Activated naive CD8-positive, alpha-beta T cell treated with anti-CD3 and anti-CD28 coated beads, Interleukin-2, amount 10 ng/mL, durations not matched to agents 7 days and 5 days (primary cell): ENCODE measurements at regions of chr9 and their contacts with region 1.

Region 1: GRCh38 chr9:132944302-132945185 is at the start of gene TSC1:
- DNase-seq: peak; percentile 98
- ATAC-seq: peak; percentile 87
- H3K4me3 Mint-ChIP-seq: peak within 1 kb of the TSS; percentile 89
- H3K27ac Mint-ChIP-seq: peak within 1 kb of the TSS; percentile 100
- H3K4me1 Mint-ChIP-seq: peaks cover 22% of the 10 kb centered on the region
- H3K27me3 Mint-ChIP-seq: no peaks in the 10 kb centered on the region
- total RNA-seq, gene TSC1: 38.5 to 43.0 TPM

Region 2: DNA sequence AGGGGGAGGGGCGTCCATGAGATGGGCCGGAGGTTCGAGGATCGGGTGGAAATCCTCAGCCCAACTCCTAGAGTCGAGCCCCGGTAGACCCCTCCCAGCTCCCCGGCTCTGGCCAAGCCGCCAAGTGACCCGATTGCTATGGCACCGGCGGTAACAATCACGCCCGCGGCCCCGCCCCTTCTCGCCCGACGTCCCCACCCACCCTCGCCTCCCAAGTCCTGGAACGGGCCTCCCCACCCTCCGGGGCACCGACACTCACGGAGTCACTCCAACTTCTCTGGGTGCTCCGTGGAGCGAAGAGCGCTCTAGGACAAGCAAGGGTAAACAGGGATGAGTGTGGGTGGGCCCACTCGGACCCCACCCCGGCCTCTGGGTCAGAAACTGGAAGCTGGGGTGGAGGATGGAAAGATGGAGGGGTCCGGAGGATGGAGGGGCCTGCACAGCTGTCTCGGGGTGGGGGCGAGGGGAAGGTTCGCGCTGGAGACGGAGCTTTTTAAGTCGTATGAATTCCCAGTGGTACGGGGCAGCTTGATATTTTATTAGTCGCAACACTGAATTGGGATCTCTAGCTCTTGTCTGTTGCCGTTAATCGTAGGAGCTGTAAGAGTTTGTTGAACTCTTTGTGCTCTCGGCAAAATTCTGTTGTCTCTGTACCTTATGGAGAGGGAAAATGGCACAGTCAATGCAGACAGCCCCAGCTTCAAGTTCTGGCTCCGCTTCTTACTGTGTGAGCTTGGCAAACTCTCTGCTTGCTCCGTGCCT is 65.7 kb before region 1 on chr9 and contains the start of gene SPACA9:
- POLR2A ChIA-PET with region 1: interaction called, 15 read pairs
- DNase-seq: peak; percentile 55
- ATAC-seq: no peak
- H3K4me3 Mint-ChIP-seq: peak within 1 kb of the TSS; percentile 81
- H3K27ac Mint-ChIP-seq: peak within 1 kb of the TSS; percentile 83
- H3K4me1 Mint-ChIP-seq: peaks cover 31% of the 10 kb centered on the region
- H3K27me3 Mint-ChIP-seq: peaks cover 4% of the 10 kb centered on the region
- total RNA-seq, gene SPACA9: 4.1 to 6.3 TPM

Region 3: DNA sequence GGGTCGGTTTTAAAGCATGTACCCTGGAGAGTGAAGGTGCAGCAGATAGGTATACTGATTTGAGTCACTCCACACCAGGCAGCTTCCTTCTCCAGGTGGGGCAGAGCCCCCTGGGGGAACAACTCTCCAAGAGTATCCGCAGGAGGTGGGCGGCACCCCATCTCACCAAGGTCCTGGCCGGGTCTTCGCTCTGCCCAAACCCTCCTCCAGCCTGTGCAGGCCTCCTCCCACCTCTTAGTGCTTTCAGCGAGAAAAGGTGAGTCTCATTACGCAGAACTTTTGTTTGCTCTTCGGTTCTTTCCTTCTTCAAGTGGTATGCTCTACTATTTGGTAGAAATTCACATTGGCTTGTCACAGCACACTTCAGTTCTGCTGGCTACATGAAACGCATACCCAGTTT is 52.1 kb before region 1 on chr9:
- POLR2A ChIA-PET with region 1: no interaction called
- DNase-seq: no peak
- ATAC-seq: no peak
- H3K4me3 Mint-ChIP-seq: no peak overlapping the region
- H3K27ac Mint-ChIP-seq: no peak overlapping the region
- H3K4me1 Mint-ChIP-seq: peaks cover 5% of the 10 kb centered on the region
- H3K27me3 Mint-ChIP-seq: no peaks in the 10 kb centered on the region